Heart left ventricle (tissue), 16 donors: ENCODE measurements at regions of chr4 and their contacts with region 1.

Region 1: DNA sequence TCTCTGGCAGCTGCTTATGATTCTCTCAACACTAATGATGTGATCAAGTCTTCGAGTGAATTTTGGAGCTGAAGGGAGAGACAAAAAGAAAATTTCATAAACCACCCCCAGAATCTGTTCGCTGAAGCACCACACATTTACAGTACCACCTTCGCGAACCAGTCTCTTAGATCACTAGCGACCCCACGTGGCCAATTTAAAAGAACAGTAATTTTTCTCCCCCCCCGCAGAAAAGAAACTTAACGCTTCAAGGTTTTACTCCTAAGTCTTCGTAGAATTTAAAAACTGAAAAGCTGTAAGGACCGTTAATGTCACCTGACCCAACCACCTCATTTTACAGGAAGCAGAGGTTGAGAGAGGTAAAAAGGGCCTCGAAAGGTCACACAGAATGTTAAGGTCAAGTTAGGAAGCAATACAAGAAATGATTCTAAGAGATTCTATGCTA is 187.5 kb downstream of the QDPR start:
- DNase-seq: peak in 3 of 5 donors; percentile 30 to 61 (median 46)
- ATAC-seq: peak; percentile 26 to 76 (median 60)
- H3K4me3 ChIP-seq: peak overlapping the region in 1 of 12 donors; percentile 1
- H3K27ac ChIP-seq: no peak overlapping the region
- H3K4me1 ChIP-seq: peaks cover 0 to 15% (median 10%) of the 10 kb centered on the region in 12 donors
- H3K27me3 ChIP-seq: no peaks in the 10 kb centered on the region
- CTCF ChIP-seq: peak; percentile 50 to 81 (median 75)
- POLR2A ChIP-seq: no peak

Region 2: GRCh38 chr4:16443504-16444088 is 880.8 kb before region 1 on chr4:
- intact Hi-C with region 1: loop called in 1 of 10 experiments (anchors 10 kb)
- DNase-seq: no peak
- ATAC-seq: no peak
- H3K4me3 ChIP-seq: no peak overlapping the region
- H3K27ac ChIP-seq: no peak overlapping the region
- H3K4me1 ChIP-seq: peaks cover 0 to 10% (median 0%) of the 10 kb centered on the region in 12 donors
- H3K27me3 ChIP-seq: no peaks in the 10 kb centered on the region
- CTCF ChIP-seq: peak; percentile 43 to 78 (median 64)
- POLR2A ChIP-seq: no peak

Region 3: GRCh38 chr4:16516796-16517439 is 807.5 kb before region 1 on chr4:
- intact Hi-C with region 1: loop called in 4 of 10 experiments (anchors 5 to 10 kb)
- DNase-seq: peak in 4 of 5 donors; percentile 35 to 50 (median 42)
- ATAC-seq: peak in 3 of 4 donors; percentile 39 to 59 (median 57)
- H3K4me3 ChIP-seq: no peak overlapping the region
- H3K27ac ChIP-seq: no peak overlapping the region
- H3K4me1 ChIP-seq: peaks cover 0 to 21% (median 2%) of the 10 kb centered on the region in 12 donors
- H3K27me3 ChIP-seq: no peaks in the 10 kb centered on the region
- CTCF ChIP-seq: peak in 8 of 12 donors; percentile 25 to 53 (median 32)
- POLR2A ChIP-seq: no peak

Region 4: GRCh38 chr4:16785793-16786527 is 538.4 kb before region 1 on chr4:
- intact Hi-C with region 1: loop called in 6 of 10 experiments (anchors 5 to 10 kb)
- DNase-seq: no peak
- ATAC-seq: no peak
- H3K4me3 ChIP-seq: no peak overlapping the region
- H3K27ac ChIP-seq: no peak overlapping the region
- H3K4me1 ChIP-seq: peaks cover 0 to 21% (median 0%) of the 10 kb centered on the region in 12 donors
- H3K27me3 ChIP-seq: no peaks in the 10 kb centered on the region
- CTCF ChIP-seq: no peak
- POLR2A ChIP-seq: no peak

Region 5: DNA sequence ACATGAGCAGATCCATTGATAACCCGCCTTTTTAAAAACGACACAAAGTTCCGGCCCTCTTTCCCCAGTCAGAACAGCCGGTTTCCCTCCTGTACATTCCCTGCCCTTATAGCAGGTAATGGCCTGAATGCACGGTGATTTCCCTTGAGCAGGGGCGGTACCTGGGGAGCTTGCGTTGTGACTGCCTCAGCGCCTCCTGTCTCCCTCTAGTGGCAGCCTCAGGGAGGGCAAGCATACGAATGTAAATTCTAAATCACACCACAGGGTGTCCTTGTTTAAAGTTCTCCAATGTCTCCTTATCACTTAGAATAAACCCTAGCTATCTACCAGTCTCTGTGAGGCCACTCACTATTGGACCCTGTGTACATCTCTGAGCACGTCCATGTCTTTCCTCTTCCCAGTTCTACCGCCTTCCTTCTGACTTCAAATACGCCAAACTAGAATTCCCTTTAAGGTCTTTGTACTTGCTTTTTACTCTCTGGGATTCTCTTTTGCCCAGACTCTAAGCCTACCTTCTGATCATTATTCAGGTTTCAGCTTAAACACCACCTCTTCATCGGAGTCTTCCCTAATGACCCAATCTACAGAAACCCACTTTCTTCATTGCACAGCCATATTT is 407.6 kb before region 1 on chr4:
- intact Hi-C with region 1: loop called in 9 of 10 experiments (anchors 2 to 5 kb)
- DNase-seq: peak in 4 of 5 donors; percentile 27 to 68 (median 48)
- ATAC-seq: peak in 3 of 4 donors; percentile 22 to 69 (median 45)
- H3K4me3 ChIP-seq: no peak overlapping the region
- H3K27ac ChIP-seq: no peak overlapping the region
- H3K4me1 ChIP-seq: no peaks in the 10 kb centered on the region
- H3K27me3 ChIP-seq: no peaks in the 10 kb centered on the region
- CTCF ChIP-seq: peak; percentile 58 to 86 (median 71)
- POLR2A ChIP-seq: no peak

Region 6: DNA sequence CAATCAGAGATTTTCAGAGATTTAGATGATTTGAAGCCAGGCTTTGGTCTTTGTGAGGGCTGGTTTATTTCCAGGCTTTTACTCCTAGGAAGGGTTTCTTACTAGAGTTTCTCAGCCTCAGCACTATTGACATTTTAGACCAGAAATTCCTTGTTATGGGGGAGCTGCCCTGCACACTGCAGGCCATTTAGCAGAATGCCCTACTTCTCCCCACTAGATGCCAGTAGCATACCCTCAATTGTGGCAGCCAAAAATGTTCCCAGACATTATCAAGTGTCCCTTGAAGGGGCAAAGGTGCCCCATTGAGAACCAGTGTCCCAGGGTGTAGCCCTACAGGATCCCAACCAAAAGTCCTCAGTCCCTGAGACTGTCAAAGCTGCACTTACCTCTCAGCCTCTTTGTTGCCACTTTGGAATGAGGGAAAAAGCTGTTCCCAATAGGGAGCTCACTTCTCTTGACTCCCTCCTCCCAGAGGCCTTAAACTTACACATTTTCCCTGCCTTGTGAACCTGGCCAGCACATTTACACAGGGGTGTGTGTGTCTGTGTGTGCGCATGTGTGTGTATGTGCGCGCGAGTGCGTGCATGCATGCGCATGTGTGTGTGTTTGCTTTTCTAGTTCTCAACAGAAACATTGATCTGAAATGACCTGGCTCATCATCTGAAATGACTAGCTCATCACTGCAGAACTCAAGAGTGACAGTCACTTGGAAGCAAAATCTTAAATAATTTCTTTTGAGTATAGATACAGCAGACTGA is 44.0 kb before region 1 on chr4:
- intact Hi-C with region 1: loop called in 1 of 10 experiments (anchors 2 kb)
- DNase-seq: no peak
- ATAC-seq: peak in 1 of 4 donors; percentile 58
- H3K4me3 ChIP-seq: no peak overlapping the region
- H3K27ac ChIP-seq: no peak overlapping the region
- H3K4me1 ChIP-seq: peaks cover 0 to 32% (median 11%) of the 10 kb centered on the region in 12 donors
- H3K27me3 ChIP-seq: no peaks in the 10 kb centered on the region
- CTCF ChIP-seq: no peak
- POLR2A ChIP-seq: no peak

Region 7: GRCh38 chr4:17356926-17357325 is 32.5 kb after region 1 on chr4:
- intact Hi-C with region 1: no loop called
- DNase-seq: no peak
- ATAC-seq: no peak
- H3K4me3 ChIP-seq: no peak overlapping the region
- H3K27ac ChIP-seq: no peak overlapping the region
- H3K4me1 ChIP-seq: no peaks in the 10 kb centered on the region
- H3K27me3 ChIP-seq: peaks cover 0 to 7% (median 0%) of the 10 kb centered on the region in 9 donors
- CTCF ChIP-seq: no peak
- POLR2A ChIP-seq: no peak

Region 8: GRCh38 chr4:17436750-17437090 is 112.3 kb after region 1 on chr4:
- intact Hi-C with region 1: no loop called
- DNase-seq: no peak
- ATAC-seq: peak in 1 of 4 donors; percentile 24
- H3K4me3 ChIP-seq: no peak overlapping the region
- H3K27ac ChIP-seq: peak overlapping the region in 4 of 12 donors; percentile 4 to 60 (median 46)
- H3K4me1 ChIP-seq: peaks cover 0 to 3% (median 0%) of the 10 kb centered on the region in 12 donors
- H3K27me3 ChIP-seq: no peaks in the 10 kb centered on the region
- CTCF ChIP-seq: no peak
- POLR2A ChIP-seq: no peak

Region 9: GRCh38 chr4:17494258-17494657 is 169.8 kb after region 1 on chr4:
- intact Hi-C with region 1: no loop called
- DNase-seq: no peak
- ATAC-seq: peak in 2 of 4 donors; percentile 25 to 64
- H3K4me3 ChIP-seq: no peak overlapping the region
- H3K27ac ChIP-seq: no peak overlapping the region
- H3K4me1 ChIP-seq: peaks cover 0 to 28% (median 2%) of the 10 kb centered on the region in 12 donors
- H3K27me3 ChIP-seq: no peaks in the 10 kb centered on the region
- CTCF ChIP-seq: no peak
- POLR2A ChIP-seq: no peak